Activated CD8-positive, alpha-beta T cell treated with anti-CD3 and anti-CD28 coated beads, Interleukin-2, amount 10 ng/mL, durations not matched to agents 7 days and 5 days (primary cell): ENCODE measurements at regions of chr9 and their contacts with region 1.

Region 1: DNA sequence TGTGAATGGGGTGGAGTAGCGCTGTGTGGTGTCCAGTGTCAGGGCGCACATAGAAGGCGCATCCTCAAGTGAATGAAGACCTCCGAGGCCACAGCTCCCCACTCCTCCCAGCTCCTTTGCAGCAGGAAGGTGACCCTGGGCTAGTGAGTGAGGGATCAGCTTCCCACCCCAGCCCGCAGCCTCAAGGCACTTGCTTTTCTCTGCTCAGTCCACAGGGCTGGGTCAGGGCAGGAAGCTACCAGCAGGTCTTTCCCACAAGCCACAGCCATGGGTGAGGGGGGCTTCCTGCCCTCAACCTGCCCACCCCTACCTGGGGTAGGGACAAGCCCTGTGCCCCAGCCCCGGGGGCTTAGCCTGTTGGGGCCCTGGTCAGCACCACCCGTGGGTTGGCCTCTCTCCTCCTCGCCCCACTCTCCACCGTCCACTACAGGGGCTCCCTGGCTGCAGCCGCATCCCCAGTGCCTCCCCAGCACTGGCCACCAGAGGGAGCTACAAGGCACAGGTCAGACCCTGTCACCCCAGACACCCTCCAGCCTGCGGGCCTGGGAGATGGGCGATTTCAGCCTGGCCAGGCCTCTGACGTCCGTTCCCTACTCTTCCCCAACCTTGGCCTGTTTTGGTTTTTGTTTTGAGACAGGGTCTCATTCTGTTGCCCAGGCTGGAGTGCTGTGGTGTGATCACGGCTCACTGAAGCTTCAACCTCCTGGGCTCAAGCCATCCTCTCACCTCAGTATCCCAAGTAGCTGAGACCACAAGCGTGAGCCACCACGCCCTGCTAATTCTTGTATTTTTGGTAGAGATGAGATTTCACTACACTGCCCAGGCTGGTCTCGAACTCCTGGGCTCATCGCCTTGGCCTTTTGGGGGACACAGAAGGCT is 1.3 kb upstream of the ABCA2 start:
- DNase-seq: peak; percentile 78
- ATAC-seq: peak; percentile 50
- H3K4me3 Mint-ChIP-seq: peak overlapping the region; percentile 71
- H3K27ac Mint-ChIP-seq: peak overlapping the region; percentile 88
- H3K4me1 Mint-ChIP-seq: peaks cover 66% of the 10 kb centered on the region
- H3K27me3 Mint-ChIP-seq: peaks cover 2% of the 10 kb centered on the region

Region 2: GRCh38 chr9:136728080-136728547 is 301.2 kb before region 1 on chr9:
- CTCF ChIA-PET with region 1: interaction called, 13 read pairs
- POLR2A ChIA-PET with region 1: interaction called, 4 read pairs
- DNase-seq: peak; percentile 93
- ATAC-seq: peak; percentile 85
- H3K4me3 Mint-ChIP-seq: peak overlapping the region; percentile 92
- H3K27ac Mint-ChIP-seq: peak overlapping the region; percentile 30
- H3K4me1 Mint-ChIP-seq: peaks cover 42% of the 10 kb centered on the region
- H3K27me3 Mint-ChIP-seq: no peaks in the 10 kb centered on the region

Region 3: DNA sequence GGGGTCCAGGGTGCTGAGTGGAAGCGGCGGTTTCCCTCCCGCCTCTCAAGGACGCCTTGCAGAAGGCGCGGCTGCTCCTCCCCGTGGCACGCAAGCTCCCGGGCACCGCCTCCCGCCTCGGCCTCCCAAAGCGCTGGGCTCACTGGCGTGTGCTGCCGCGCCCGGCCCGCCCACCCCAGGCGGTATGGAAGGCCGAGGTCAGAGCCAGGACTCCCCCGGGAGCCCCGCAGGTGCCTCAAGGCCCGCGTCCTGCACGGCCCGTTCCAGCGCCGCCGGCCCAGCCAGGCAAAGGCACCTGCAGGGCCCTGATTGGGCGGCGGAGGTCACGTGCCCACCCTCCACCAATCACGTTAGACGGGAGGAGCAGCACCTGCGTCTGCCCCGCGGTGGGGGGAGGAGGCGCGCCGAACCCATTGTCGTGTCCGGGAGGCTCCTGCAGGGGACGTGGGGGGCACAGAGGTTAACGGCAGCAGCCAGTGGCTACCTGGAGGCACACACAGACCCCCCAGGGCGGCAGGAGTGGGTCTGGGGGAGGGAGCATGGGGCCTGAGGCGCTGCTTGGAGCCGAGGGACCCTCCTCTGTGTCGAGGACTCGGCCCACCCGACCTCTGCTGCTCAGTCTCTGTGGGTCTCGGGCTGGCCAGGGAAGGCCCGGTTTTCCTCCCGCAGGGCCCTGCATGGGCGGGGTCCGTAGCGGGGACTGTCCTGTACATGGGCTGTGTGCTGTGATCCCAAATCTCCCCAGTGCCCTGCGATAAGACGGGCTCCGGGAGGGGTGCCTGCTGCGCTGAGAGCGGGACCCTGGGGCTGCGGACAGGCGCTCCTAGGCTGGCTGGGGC is 79.3 kb before region 1 on chr9:
- CTCF ChIA-PET with region 1: interaction called, 146 read pairs
- POLR2A ChIA-PET with region 1: interaction called, 11 read pairs
- DNase-seq: peak; percentile 98
- ATAC-seq: peak; percentile 97
- H3K4me3 Mint-ChIP-seq: peak overlapping the region; percentile 84
- H3K27ac Mint-ChIP-seq: peak overlapping the region; percentile 90
- H3K4me1 Mint-ChIP-seq: peaks cover 17% of the 10 kb centered on the region
- H3K27me3 Mint-ChIP-seq: no peaks in the 10 kb centered on the region

Region 4: DNA sequence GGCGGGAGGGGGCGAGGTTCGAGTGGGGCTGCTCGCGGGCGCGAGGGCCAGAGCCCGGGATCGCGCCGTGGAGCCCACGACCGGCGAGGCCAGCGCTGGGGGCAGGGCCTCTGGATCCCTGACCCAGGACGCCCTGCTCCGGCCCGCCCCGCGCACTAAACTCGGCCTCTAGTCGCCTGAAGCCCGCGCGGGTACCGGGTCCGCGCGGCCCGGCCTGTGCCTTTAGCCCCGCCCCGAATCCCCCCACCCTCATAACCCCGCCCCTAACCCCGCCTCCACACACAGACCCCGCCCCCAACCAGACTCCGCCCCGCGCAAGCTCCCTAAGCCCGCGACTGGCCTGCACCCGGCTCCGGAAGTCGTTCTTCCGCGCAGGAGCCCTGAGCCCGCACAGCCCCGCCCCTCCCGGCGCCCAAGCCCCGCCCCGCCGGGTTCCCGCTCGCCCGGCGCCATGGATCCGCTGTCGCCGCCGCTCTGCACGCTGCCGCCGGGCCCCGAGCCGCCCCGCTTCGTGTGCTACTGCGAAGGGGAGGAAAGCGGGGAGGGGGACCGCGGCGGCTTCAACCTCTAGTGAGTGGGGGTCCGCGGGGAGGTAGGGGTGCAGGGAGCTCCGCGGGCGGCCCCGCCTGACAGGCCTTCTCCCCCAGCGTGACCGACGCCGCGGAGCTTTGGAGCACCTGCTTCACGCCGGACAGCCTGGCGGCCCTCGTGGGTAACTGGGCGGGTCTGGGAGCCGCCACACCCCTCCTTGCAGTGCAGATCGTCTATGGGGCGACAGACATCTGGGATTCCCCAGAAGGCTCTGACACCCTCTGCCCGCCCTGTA is 37.1 kb before region 1 on chr9 and contains the start of gene PAXX:
- CTCF ChIA-PET with region 1: interaction called, 43 read pairs
- POLR2A ChIA-PET with region 1: interaction called, 7 read pairs
- DNase-seq: peak; percentile 96
- ATAC-seq: peak; percentile 87
- H3K4me3 Mint-ChIP-seq: peak within 1 kb of the TSS; percentile 84
- H3K27ac Mint-ChIP-seq: peak within 1 kb of the TSS; percentile 87
- H3K4me1 Mint-ChIP-seq: peaks cover 37% of the 10 kb centered on the region
- H3K27me3 Mint-ChIP-seq: peaks cover 15% of the 10 kb centered on the region
- total RNA-seq, gene PAXX: 80.6 to 85.2 TPM

Region 5: GRCh38 chr9:137006116-137007003 is 22.9 kb before region 1 on chr9:
- CTCF ChIA-PET with region 1: interaction called, 25 read pairs
- POLR2A ChIA-PET with region 1: no interaction called
- DNase-seq: no peak
- ATAC-seq: no peak
- H3K4me3 Mint-ChIP-seq: no peak overlapping the region
- H3K27ac Mint-ChIP-seq: peak overlapping the region; percentile 39
- H3K4me1 Mint-ChIP-seq: peaks cover 14% of the 10 kb centered on the region
- H3K27me3 Mint-ChIP-seq: no peaks in the 10 kb centered on the region

Region 6: DNA sequence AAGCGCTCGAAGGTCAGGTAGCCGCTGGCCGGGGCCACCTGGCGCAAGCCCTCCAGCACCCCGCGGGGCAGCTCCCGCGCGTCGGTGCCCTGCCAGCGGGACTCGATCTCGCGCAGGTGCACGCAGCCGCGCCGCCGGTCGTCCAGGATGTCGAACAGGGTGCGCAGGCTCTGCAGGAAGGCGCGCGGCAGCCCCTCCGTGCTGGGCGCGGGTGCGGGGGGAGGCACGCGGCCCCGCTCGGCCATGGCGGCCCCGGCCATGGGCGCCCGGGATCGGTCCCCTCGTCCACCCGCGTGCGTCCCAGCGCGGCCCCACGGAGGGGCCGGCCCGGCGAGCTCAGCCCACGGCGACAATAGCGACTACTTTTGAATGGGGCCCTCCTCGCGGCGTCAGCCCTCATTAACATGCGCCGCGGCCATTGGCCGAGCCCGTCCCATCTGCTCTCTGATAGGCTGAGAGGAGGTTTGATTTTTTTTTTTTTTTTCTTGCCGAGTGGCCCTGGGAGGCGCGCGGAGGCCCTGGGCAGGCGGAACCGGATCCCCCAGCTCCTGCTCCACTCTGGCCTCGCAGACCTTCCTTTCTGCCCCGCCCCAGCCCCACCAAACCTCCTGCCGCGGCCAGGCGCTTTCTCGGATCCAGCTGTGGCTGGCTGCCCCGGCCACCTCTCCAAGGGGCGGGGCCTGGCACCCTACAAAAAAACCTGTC is 41.1 kb after region 1 on chr9 and contains the start of gene SAPCD2:
- CTCF ChIA-PET with region 1: interaction called, 32 read pairs
- POLR2A ChIA-PET with region 1: interaction called, 5 read pairs
- DNase-seq: peak; percentile 92
- ATAC-seq: peak; percentile 90
- H3K4me3 Mint-ChIP-seq: peak within 1 kb of the TSS; percentile 86
- H3K27ac Mint-ChIP-seq: peak within 1 kb of the TSS; percentile 91
- H3K4me1 Mint-ChIP-seq: peaks cover 28% of the 10 kb centered on the region
- H3K27me3 Mint-ChIP-seq: no peaks in the 10 kb centered on the region
- total RNA-seq, gene SAPCD2: 56.8 to 57.0 TPM